Activated B cell treated with CpG ODN at 0.5 μM for 24 hours (primary cell): ENCODE measurements at regions of chr12 and their contacts with region 1.

Region 1: GRCh38 chr12:64696080-64696741 is 63.0 kb downstream of the GNS start:
- DNase-seq: no peak
- ATAC-seq: no peak
- H3K4me3 Mint-ChIP-seq: no peak overlapping the region
- H3K27ac Mint-ChIP-seq: no peak overlapping the region
- H3K4me1 Mint-ChIP-seq: peaks cover 29% of the 10 kb centered on the region
- H3K27me3 Mint-ChIP-seq: no peaks in the 10 kb centered on the region
- CTCF ChIP-seq: no peak

Region 2: DNA sequence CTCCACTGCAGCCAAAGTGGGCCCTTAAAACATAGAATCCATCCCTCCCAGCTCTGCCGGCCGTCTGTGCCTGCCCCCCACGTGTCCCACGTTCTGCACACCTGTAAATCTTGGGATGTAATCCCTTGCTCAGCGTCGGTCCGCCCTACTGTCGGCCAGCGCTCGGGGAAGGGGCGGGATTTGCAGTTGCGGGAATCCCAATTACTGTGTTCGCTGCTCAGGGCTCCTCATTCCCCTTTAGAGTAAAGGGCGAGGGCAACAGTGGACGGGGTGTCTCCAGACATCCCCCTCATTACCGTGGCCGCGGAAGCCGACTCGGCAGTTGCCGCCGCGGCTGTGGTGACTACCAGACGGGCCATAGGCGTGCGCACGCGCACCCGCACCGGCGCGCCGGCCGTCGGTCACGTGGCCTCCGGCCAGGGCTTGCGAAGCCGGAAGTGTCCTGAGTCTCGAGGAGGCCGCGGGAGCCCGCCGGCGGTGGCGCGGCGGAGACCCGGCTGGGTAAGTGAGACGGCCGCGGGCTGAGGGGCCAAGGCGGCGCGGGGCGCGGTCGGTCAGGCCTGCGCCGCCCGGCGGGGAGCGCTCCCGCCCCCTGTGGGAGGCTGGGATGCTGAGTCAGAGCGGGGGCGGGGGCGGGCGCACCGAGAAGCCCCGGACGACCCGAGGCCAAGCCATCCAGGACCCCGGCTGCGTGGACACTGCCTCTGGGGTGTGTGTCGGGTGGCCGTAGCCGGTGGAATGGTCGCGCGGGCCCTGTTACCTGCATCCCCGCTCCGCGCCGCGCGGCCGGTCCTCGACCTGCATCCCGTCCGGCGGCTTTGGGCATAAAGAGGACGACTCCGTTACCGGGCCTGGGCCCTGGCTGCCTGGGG is 244.3 kb before region 1 on chr12 and contains the start of gene TBK1:
- CTCF ChIA-PET with region 1: no interaction called
- POLR2A ChIA-PET with region 1: interaction called, 3 read pairs
- intact Hi-C with region 1: loop called (anchors 1 kb)
- DNase-seq: peak; percentile 82
- ATAC-seq: peak; percentile 82
- H3K4me3 Mint-ChIP-seq: peak within 1 kb of the TSS; percentile 97
- H3K27ac Mint-ChIP-seq: peak within 1 kb of the TSS; percentile 88
- H3K4me1 Mint-ChIP-seq: peaks cover 44% of the 10 kb centered on the region
- H3K27me3 Mint-ChIP-seq: no peaks in the 10 kb centered on the region
- CTCF ChIP-seq: no peak
- total RNA-seq, gene TBK1: 32.6 and 37.4 TPM in 2 replicates

Region 3: GRCh38 chr12:64560396-64561304 is 135.6 kb before region 1 on chr12:
- CTCF ChIA-PET with region 1: interaction called, 10 read pairs
- POLR2A ChIA-PET with region 1: interaction called, 6 read pairs
- intact Hi-C with region 1: no loop called
- DNase-seq: no peak
- ATAC-seq: no peak
- H3K4me3 Mint-ChIP-seq: no peak overlapping the region
- H3K27ac Mint-ChIP-seq: no peak overlapping the region
- H3K4me1 Mint-ChIP-seq: no peaks in the 10 kb centered on the region
- H3K27me3 Mint-ChIP-seq: no peaks in the 10 kb centered on the region
- CTCF ChIP-seq: no peak

Region 4: GRCh38 chr12:64590183-64590582 is 106.0 kb before region 1 on chr12:
- CTCF ChIA-PET with region 1: interaction called, 14 read pairs
- POLR2A ChIA-PET with region 1: no interaction called
- intact Hi-C with region 1: loop called (anchors 1 kb)
- DNase-seq: no peak
- ATAC-seq: no peak
- H3K4me3 Mint-ChIP-seq: no peak overlapping the region
- H3K27ac Mint-ChIP-seq: no peak overlapping the region
- H3K4me1 Mint-ChIP-seq: no peaks in the 10 kb centered on the region
- H3K27me3 Mint-ChIP-seq: no peaks in the 10 kb centered on the region
- CTCF ChIP-seq: no peak

Region 5: GRCh38 chr12:64679487-64679983 is 16.7 kb before region 1 on chr12:
- CTCF ChIA-PET with region 1: interaction called, 8 read pairs
- POLR2A ChIA-PET with region 1: interaction called, 3 read pairs
- intact Hi-C with region 1: loop called (anchors 2 kb)
- DNase-seq: no peak
- ATAC-seq: peak; percentile 64
- H3K4me3 Mint-ChIP-seq: peak overlapping the region; percentile 53
- H3K27ac Mint-ChIP-seq: peak overlapping the region; percentile 82
- H3K4me1 Mint-ChIP-seq: peaks cover 95% of the 10 kb centered on the region
- H3K27me3 Mint-ChIP-seq: no peaks in the 10 kb centered on the region
- CTCF ChIP-seq: no peak

Region 6: DNA sequence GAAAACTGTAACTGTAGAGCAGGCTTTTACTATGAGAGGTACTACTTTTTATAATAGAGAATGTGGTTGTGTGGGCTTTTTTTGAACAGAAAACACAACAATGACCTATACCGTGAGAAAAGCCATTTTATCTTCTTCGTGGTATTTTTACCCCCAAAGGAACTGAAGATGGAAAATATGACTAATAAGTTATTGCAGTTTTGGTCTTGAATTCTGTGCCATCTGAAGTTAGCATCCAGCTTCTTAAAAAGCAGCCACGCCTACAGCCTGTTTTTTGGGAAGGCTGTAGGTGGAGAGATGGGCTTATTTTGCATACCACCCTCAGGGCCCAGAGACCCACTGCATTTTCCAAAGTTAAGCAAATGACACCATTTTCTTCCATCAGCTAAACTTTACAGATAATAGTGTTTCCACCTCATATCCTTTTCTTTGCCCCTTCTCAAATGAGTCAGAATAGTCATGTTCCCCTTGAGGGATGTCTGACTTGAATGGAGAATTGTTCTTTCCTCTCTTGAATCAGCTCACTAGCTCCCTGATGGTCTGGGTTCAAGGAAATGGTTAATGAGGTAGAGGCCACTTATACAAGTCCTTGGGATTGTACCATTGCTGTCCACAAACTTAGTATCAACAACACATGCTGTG is 181.3 kb after region 1 on chr12:
- CTCF ChIA-PET with region 1: no interaction called
- POLR2A ChIA-PET with region 1: no interaction called
- intact Hi-C with region 1: no loop called
- DNase-seq: no peak
- ATAC-seq: no peak
- H3K4me3 Mint-ChIP-seq: no peak overlapping the region
- H3K27ac Mint-ChIP-seq: no peak overlapping the region
- H3K4me1 Mint-ChIP-seq: no peaks in the 10 kb centered on the region
- H3K27me3 Mint-ChIP-seq: peaks cover 2% of the 10 kb centered on the region
- CTCF ChIP-seq: no peak